ENCODE measurements at regions of chr12 and their contacts with region 1.

Region 1: GRCh38 chr12:62466594-62467491 is at the start of gene MON2:
- DNase-seq: peak; percentile 45
- H3K4me3 ChIP-seq: peak within 1 kb of the TSS; percentile 87
- CTCF ChIP-seq: no peak

Region 2: GRCh38 chr12:62543753-62544152 is 76.9 kb after region 1 on chr12:
- in situ Hi-C with region 1: no loop called
- DNase-seq: no peak
- H3K4me3 ChIP-seq: no peak overlapping the region
- CTCF ChIP-seq: no peak

Region 3: DNA sequence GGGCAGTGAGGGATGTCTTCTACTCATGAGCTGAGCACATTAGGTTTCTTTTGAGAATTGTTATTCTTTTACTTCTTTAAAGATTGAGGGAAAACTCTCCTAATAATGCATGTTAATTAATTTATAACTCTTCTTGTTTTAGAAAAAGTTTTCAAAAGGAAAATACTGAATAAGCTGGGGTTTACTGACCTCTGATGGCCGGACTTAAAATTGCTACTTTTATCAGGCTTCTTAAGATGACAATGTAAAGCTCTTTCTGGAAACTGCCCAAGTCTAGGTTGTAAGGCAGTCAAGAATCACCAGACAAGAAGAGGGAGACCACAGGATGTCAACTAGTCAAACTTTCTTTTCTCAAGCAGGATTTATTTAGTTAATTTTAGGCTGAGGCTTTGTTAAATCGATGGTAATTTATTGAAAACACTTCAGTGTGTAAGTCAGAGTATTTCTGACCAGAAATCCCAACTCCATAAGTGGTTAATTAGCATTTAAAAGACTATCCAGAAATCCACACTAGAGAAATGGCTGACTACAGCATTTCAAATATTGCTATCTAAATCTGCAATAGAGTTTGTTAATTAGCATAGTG is 602.1 kb after region 1 on chr12:
- in situ Hi-C with region 1: loop called (anchors 25 kb)
- DNase-seq: peak; percentile 75
- H3K4me3 ChIP-seq: no peak overlapping the region
- CTCF ChIP-seq: peak; percentile 58

Measured in astrocyte of the cerebellum (primary cell).